HCT116 (cell line): ENCODE measurements at regions of chr9 and their contacts with region 1.

Region 1: DNA sequence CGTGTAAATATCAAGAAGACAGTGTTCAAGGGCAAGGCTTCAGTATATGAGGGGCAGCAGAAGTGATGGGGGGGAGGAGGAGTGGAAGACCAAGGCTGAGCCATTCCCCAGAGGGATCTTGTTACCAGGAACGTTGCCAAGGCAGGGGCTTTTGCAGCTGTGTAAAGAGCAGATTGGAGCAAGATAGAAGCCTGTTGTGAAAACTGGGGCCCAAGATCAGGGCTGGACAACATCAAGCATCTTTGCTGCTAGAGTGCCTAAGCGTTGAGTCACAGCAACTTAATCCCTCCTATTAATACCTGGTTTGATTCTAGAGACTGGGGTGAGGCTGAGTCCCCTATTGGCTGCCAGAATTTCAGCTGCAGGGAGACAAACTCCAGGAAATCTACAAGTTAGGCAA is 18.4 kb upstream of the ERCC6L2 start:
- DNase-seq: no peak
- ATAC-seq: peak; percentile 97
- H3K4me3 ChIP-seq: peak overlapping the region in 1 of 2 experiments; percentile 3; a peak in 1 of 4 replicates
- H3K27ac ChIP-seq: peak overlapping the region; percentile 37
- H3K4me1 ChIP-seq: peaks cover 19 to 36% of the 10 kb centered on the region in 2 experiments
- H3K27me3 ChIP-seq: no peaks in the 10 kb centered on the region
- CTCF ChIP-seq: no peak
- POLR2A ChIP-seq: no peak
- RAD21 ChIP-seq: no peak

Region 2: DNA sequence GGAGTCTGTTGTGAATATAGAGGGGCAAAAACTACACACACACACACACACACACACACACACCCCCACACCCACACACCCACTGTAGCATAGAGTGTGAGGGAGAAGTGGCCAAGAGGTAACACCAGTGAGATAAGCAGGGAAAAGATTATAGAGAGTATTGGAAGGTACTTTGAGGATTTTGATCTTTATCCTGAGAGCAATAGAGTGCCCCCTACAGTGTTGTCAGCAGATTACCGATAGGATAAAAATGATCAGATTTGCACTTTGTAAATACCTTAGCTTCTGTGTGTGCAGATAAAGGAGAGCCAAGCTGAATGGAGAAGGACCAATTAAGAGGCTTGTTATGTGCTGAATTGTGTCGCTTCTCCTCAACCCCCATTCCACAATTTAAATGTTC is 50.7 kb after region 1 on chr9:
- CTCF ChIA-PET with region 1: no interaction called
- POLR2A ChIA-PET with region 1: no interaction called
- RAD21 ChIA-PET with region 1: no interaction called
- intact Hi-C with region 1: loop called (anchors 5 kb)
- DNase-seq: no peak
- ATAC-seq: peak; percentile 30; the same call in 1 of the 2 replicates
- H3K4me3 ChIP-seq: no peak overlapping the region
- H3K27ac ChIP-seq: no peak overlapping the region
- H3K4me1 ChIP-seq: no peaks in the 10 kb centered on the region
- H3K27me3 ChIP-seq: no peaks in the 10 kb centered on the region
- CTCF ChIP-seq: peak; percentile 7 to 48 (median 48); a peak in 4 of 6 replicates
- POLR2A ChIP-seq: no peak
- RAD21 ChIP-seq: peak; percentile 15; the same call in 1 of the 2 replicates

Region 3: GRCh38 chr9:96500696-96501632 is 643.8 kb after region 1 on chr9:
- CTCF ChIA-PET with region 1: no interaction called
- POLR2A ChIA-PET with region 1: no interaction called
- RAD21 ChIA-PET with region 1: no interaction called
- intact Hi-C with region 1: no loop called
- DNase-seq: no peak
- ATAC-seq: no peak
- H3K4me3 ChIP-seq: no peak overlapping the region
- H3K27ac ChIP-seq: no peak overlapping the region
- H3K4me1 ChIP-seq: no peaks in the 10 kb centered on the region
- H3K27me3 ChIP-seq: no peaks in the 10 kb centered on the region
- CTCF ChIP-seq: no peak
- POLR2A ChIP-seq: no peak
- RAD21 ChIP-seq: no peak